Dendritic cell treated with granulocyte-macrophage colony-stimulating factor and Interleukin-4, amounts not matched to agents 40 ng/mL and 50 ng/mL, for 4 days (primary cell): ENCODE measurements at regions of chr17 and their contacts with region 1.

Region 1: GRCh38 chr17:78689029-78689428 is 93.0 kb downstream of the CYTH1 start:
- H3K4me3 Mint-ChIP-seq: no peak overlapping the region
- H3K27ac Mint-ChIP-seq: no peak overlapping the region
- H3K4me1 Mint-ChIP-seq: no peaks in the 10 kb centered on the region
- H3K27me3 Mint-ChIP-seq: no peaks in the 10 kb centered on the region

Region 2: GRCh38 chr17:78637643-78638420 is 51.2 kb before region 1 on chr17:
- intact Hi-C with region 1: loop called (anchors 10 kb)
- H3K4me3 Mint-ChIP-seq: no peak overlapping the region
- H3K27ac Mint-ChIP-seq: peak overlapping the region; percentile 97
- H3K4me1 Mint-ChIP-seq: peaks cover 37% of the 10 kb centered on the region
- H3K27me3 Mint-ChIP-seq: peaks cover 4% of the 10 kb centered on the region

Region 3: GRCh38 chr17:78716814-78717393 is 27.9 kb after region 1 on chr17:
- intact Hi-C with region 1: no loop called
- H3K4me3 Mint-ChIP-seq: no peak overlapping the region
- H3K27ac Mint-ChIP-seq: no peak overlapping the region
- H3K4me1 Mint-ChIP-seq: peaks cover 82% of the 10 kb centered on the region
- H3K27me3 Mint-ChIP-seq: no peaks in the 10 kb centered on the region

Region 4: DNA sequence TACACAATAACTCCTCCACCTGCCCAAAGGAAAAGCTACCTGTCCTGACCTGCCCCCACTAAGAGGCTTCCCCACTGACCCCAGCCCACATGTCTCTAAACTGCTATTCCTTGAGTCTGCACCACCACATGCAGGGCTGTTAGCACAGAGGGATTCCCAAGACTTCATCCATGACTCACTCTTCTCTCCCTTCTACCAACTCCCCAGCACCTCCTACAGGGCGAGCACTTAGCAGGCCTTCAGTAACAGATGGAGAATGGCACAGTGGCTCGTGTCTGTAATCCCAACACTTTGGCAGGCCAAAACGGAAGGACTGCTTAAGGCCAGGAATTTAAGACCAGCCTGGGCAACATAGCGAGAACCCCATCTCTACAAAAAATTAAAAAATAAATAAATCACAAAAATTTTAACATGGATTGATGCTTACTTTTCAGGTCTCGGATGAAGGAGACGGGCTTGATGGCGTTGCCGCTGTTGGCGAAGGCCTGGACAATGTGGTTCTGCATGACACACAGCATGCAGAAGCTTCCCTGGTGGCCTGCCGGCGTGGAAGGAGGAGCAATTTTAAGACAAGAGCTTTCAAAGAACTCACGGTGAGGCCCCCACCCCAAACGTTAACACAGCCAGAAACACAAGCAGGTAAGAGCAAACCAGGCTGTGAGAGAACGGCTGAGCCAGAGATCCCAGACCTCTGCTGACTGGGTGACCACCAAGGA is 139.6 kb after region 1 on chr17:
- intact Hi-C with region 1: no loop called
- H3K4me3 Mint-ChIP-seq: no peak overlapping the region
- H3K27ac Mint-ChIP-seq: no peak overlapping the region
- H3K4me1 Mint-ChIP-seq: peaks cover 30% of the 10 kb centered on the region
- H3K27me3 Mint-ChIP-seq: no peaks in the 10 kb centered on the region